Left ventricle myocardium superior (tissue), 1 donor: ENCODE measurements at regions of chr15 and their contacts with region 1.

Region 1: GRCh38 chr15:62275828-62276227 is 110.7 kb upstream of the C2CD4B start:
- DNase-seq: no peak
- ATAC-seq: no peak

Region 2: GRCh38 chr15:62316413-62317060 is 40.7 kb after region 1 on chr15:
- intact Hi-C with region 1: loop called (anchors 2 kb)
- DNase-seq: no peak
- ATAC-seq: no peak

Region 3: GRCh38 chr15:62606376-62607113 is 330.7 kb after region 1 on chr15:
- intact Hi-C with region 1: no loop called
- DNase-seq: no peak
- ATAC-seq: peak; percentile 31